Naive thymus-derived CD4-positive, alpha-beta T cell (primary cell): ENCODE measurements at regions of chr18 and their contacts with region 1.

Region 1: GRCh38 chr18:58699551-58699950 is 28.3 kb downstream of the MALT1 start:
- DNase-seq: no peak
- ATAC-seq: no peak
- H3K4me3 ChIP-seq: no peak overlapping the region
- H3K4me3 Mint-ChIP-seq: no peak overlapping the region
- H3K27ac ChIP-seq: no peak overlapping the region
- H3K27ac Mint-ChIP-seq: no peak overlapping the region
- H3K4me1 ChIP-seq: peaks cover 9 to 39% of the 10 kb centered on the region in 2 donors
- H3K4me1 Mint-ChIP-seq: peaks cover 20 to 54% (median 28%) of the 10 kb centered on the region in 7 donors
- H3K27me3 ChIP-seq: no peaks in the 10 kb centered on the region
- H3K27me3 Mint-ChIP-seq: no peaks in the 10 kb centered on the region

Region 2: GRCh38 chr18:58015065-58015780 is 684.3 kb before region 1 on chr18:
- CTCF ChIA-PET with region 1: no interaction called
- POLR2A ChIA-PET with region 1: no interaction called
- intact Hi-C with region 1: no loop called
- DNase-seq: no peak
- ATAC-seq: peak; percentile 41
- H3K4me3 ChIP-seq: no peak overlapping the region
- H3K4me3 Mint-ChIP-seq: no peak overlapping the region
- H3K27ac ChIP-seq: no peak overlapping the region
- H3K27ac Mint-ChIP-seq: no peak overlapping the region
- H3K4me1 ChIP-seq: no peaks in the 10 kb centered on the region
- H3K4me1 Mint-ChIP-seq: peaks cover 0 to 3% (median 0%) of the 10 kb centered on the region in 7 donors
- H3K27me3 ChIP-seq: no peaks in the 10 kb centered on the region
- H3K27me3 Mint-ChIP-seq: peaks cover 0 to 23% (median 12%) of the 10 kb centered on the region in 5 donors

Region 3: DNA sequence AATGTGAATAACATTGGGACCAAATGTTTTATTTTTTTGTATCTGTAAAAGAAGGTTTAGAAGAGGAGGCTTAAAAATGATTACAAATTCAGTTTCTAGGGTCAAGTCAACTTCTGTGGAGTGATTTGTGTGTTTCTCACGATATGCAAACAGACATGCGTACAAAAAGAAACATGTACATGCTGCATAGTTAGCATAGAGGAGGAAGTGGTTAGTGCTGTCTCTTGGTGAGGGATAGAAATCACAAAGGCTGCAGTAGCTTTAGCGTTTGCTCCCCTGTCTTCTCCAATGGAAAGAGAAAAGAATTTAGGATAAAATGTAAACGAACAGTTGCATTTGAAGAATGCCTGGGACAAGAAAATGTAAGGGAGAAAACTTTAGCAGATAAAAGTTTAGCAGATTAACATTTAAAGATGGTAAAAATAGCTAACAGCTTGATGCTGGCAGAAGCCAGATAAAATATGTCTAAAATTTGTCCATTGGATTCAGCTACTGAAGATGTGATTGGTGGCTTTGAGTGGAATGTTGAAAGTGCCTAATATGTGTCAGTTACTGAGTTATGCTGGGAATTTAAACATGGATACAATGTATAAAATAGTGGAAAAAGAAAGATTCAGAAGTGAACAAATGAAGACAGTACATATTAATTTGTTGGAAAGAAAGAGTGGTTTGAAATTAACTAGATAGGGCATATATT is 16.7 kb after region 1 on chr18:
- CTCF ChIA-PET with region 1: interaction called, 3 read pairs
- POLR2A ChIA-PET with region 1: interaction called, 10 read pairs
- intact Hi-C with region 1: loop called (anchors 2 kb)
- DNase-seq: peak in 7 of 9 donors; percentile 19 to 59 (median 44)
- ATAC-seq: peak; percentile 86
- H3K4me3 ChIP-seq: no peak overlapping the region
- H3K4me3 Mint-ChIP-seq: peak overlapping the region; percentile 63 to 92 (median 80)
- H3K27ac ChIP-seq: peak overlapping the region; percentile 44
- H3K27ac Mint-ChIP-seq: peak overlapping the region; percentile 77 to 94 (median 87)
- H3K4me1 ChIP-seq: peaks cover 25 to 32% of the 10 kb centered on the region in 2 donors
- H3K4me1 Mint-ChIP-seq: peaks cover 38 to 92% (median 76%) of the 10 kb centered on the region in 7 donors
- H3K27me3 ChIP-seq: no peaks in the 10 kb centered on the region
- H3K27me3 Mint-ChIP-seq: no peaks in the 10 kb centered on the region

Region 4: DNA sequence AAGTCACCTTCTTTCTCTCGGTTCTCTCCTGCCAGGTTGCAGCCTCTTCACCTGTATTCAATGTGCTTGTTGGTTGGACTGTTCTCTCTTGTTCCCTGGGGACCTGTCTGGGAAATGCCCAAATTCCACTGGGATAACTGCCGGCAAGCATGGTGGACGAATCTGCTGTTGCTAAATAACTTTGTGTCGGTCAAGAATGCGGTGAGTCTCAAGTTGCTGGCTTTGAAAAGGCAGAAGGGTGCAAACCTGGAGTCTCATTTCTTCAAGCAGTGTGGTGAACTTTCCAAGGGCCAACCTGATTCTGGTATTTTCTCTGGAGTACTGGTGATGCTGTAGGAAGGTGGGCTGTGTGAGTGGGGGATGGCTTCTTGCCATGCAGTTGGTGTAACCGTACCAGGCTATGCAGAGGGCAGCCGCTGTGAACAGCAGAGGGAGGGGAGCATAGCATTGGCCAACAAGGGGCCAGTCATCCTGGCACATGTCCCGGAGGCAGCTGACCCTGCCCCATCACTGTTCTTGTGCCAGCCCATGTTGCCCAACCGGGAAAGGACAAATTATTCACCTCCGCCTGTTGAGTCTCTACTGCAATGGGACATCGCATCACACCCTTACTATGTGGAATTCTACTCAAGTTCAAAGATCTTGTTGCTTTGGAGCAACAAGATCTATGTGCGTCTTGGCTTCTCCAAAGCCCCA is 352.1 kb after region 1 on chr18:
- CTCF ChIA-PET with region 1: no interaction called
- POLR2A ChIA-PET with region 1: no interaction called
- intact Hi-C with region 1: no loop called
- DNase-seq: no peak
- ATAC-seq: no peak
- H3K4me3 ChIP-seq: no peak overlapping the region
- H3K4me3 Mint-ChIP-seq: no peak overlapping the region
- H3K27ac ChIP-seq: no peak overlapping the region
- H3K27ac Mint-ChIP-seq: no peak overlapping the region
- H3K4me1 ChIP-seq: no peaks in the 10 kb centered on the region
- H3K4me1 Mint-ChIP-seq: no peaks in the 10 kb centered on the region
- H3K27me3 ChIP-seq: peaks cover 0 to 3% of the 10 kb centered on the region in 2 donors
- H3K27me3 Mint-ChIP-seq: peaks cover 8 to 53% (median 29%) of the 10 kb centered on the region in 5 donors

Region 5: DNA sequence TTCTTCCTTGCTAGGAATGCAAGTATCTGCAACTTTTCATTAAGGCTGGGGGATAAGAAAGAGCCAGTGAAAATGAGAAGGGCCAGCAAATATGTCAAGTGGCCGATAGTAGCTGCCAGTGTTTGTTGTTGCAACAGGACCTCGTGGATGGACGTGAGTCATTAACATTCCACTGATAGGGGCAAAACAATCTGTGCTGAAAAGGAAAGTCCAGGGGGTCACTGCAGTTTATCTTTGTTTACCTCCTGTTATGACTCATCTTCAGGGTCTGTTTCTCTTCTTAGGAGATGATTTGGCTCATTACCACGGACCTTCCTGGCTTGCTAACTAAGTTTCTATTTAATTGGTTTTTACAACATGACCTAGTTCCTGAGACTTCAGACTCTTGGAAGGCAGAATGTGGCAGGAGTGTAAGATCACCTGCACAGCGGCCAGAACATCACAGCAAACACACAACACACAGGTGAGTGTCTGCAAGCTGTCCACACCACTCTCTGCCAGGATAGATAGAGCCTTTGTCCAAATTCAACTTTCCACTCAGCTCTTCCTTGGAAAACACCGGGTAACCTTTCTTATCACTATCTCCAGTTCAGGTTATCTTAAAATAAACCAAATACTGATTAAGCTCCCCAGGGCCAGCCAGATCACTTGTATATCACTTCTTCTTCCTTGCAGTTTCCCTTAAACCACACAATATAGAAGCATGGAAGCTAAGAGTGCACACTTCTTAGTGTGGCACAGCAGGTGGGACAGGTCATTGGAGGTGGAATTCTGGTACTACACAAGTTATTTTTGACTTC is 817.0 kb after region 1 on chr18:
- CTCF ChIA-PET with region 1: no interaction called
- POLR2A ChIA-PET with region 1: no interaction called
- intact Hi-C with region 1: no loop called
- DNase-seq: no peak
- ATAC-seq: no peak
- H3K4me3 ChIP-seq: no peak overlapping the region
- H3K4me3 Mint-ChIP-seq: no peak overlapping the region
- H3K27ac ChIP-seq: no peak overlapping the region
- H3K27ac Mint-ChIP-seq: no peak overlapping the region
- H3K4me1 ChIP-seq: no peaks in the 10 kb centered on the region
- H3K4me1 Mint-ChIP-seq: no peaks in the 10 kb centered on the region
- H3K27me3 ChIP-seq: no peaks in the 10 kb centered on the region
- H3K27me3 Mint-ChIP-seq: peaks cover 3 to 31% (median 21%) of the 10 kb centered on the region in 5 donors